CD8-positive, alpha-beta memory T cell (primary cell): ENCODE measurements at regions of chrX and their contacts with region 1.

Region 1: DNA sequence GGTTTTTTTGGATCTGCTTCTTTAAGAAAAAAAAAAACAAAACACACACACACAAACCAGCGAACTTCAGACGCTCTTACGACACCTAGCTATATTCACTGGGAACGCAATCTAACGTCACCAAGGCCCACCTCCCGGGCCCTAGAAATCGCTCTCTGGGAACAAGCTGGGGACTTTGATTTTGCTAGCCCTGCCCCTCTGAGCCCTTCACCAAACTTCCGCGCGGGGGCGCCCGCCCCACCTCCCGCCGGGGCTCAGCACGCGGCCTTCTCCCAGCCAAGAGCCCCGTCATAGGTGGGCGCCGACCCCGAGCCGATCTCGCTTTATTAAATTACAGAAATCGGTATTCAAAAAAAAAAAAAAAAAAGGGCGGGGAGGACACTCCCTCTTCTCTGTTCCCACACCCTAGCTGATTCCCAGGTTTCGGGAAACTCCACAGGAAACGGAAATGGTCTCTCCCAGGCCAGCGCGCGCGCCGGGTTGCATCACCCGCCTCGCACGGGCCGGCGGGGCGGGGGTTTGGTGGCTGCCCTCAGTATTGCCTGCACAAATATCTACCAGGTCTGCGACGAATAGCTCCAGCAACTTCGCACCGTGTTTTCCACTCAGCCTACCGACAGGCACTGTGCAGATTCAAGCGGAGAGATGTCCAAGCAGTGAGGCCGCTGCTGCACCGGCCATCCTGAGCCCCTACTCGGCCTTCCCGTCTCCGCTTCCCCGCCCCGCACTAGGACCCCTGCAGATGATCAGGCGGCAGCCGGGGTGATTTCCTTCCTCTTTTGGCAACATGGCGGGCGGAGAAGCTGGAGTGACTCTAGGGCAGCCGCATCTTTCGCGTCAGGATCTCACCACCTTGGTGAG is at the start of gene EIF2S3:
- DNase-seq: peak; percentile 72 to 96 (median 90)
- H3K4me3 ChIP-seq: peak within 1 kb of the TSS; percentile 90
- H3K4me3 Mint-ChIP-seq: peak within 1 kb of the TSS in 1 of 7 donors; percentile 95
- H3K27ac ChIP-seq: peak within 1 kb of the TSS; percentile 90
- H3K27ac Mint-ChIP-seq: peak within 1 kb of the TSS in 2 of 8 donors; percentile 99 to 100
- H3K4me1 ChIP-seq: peaks cover 7% of the 10 kb centered on the region
- H3K4me1 Mint-ChIP-seq: peaks cover 8 to 16% (median 13%) of the 10 kb centered on the region in 3 donors
- H3K27me3 ChIP-seq: no peaks in the 10 kb centered on the region
- H3K27me3 Mint-ChIP-seq: no peaks in the 10 kb centered on the region
- total RNA-seq, gene EIF2S3: 259 to 277 TPM

Region 2: GRCh38 chrX:23782863-23783568 is 271.4 kb before region 1 on chrX and contains the start of gene SAT1:
- CTCF ChIA-PET with region 1: interaction called, 20 read pairs
- POLR2A ChIA-PET with region 1: interaction called, 8 read pairs
- DNase-seq: peak; percentile 87 to 96 (median 90)
- H3K4me3 ChIP-seq: peak within 1 kb of the TSS; percentile 78
- H3K4me3 Mint-ChIP-seq: peak within 1 kb of the TSS; percentile 95 to 100 (median 97)
- H3K27ac ChIP-seq: peak within 1 kb of the TSS; percentile 89
- H3K27ac Mint-ChIP-seq: peak within 1 kb of the TSS; percentile 96 to 98 (median 98)
- H3K4me1 ChIP-seq: peaks cover 23% of the 10 kb centered on the region
- H3K4me1 Mint-ChIP-seq: peaks cover 34 to 44% (median 42%) of the 10 kb centered on the region in 3 donors
- H3K27me3 ChIP-seq: no peaks in the 10 kb centered on the region
- H3K27me3 Mint-ChIP-seq: peaks cover 0 to 5% of the 10 kb centered on the region in 2 donors
- total RNA-seq, gene SAT1: 40.0 to 41.3 TPM

Region 3: DNA sequence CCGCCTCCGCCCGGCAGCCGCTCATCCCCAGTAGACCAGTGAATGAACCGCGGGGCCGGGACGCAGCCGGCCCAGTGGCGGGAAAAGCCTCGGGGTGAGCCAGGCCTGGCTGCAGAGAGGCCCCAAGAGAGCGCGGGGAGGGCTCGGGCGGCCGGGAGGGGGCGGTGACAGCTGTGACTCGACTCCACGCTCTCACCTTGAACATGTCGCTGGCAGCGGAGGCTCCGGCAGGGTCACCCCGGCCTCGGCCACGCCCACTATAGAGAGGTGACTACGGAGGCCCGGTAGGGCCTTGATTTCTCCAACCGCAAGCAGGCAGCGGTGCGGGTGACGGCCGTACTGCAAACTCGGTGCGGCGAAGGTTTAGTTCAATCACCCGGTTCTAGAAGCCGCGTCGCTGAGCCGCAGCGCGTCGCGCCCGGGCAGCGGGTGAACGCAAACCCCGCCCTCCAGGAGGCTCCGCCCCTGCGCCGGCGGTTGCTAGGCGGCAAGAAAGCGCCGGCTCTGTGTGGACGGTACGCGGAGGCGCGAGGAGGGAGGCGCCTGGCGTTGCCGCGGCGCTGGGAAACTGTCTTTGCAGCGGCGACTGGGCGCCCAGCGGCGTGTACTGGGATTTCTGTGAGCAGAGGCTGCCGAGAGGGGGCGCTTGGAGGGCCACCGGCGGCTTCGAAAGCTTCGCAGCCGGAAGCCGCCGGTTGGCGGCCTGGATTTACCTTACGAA is 146.8 kb before region 1 on chrX and contains the starts of genes APOO and CXorf58:
- CTCF ChIA-PET with region 1: interaction called, 47 read pairs
- POLR2A ChIA-PET with region 1: interaction called, 17 read pairs
- DNase-seq: peak; percentile 83 to 94 (median 91)
- H3K4me3 ChIP-seq: peak within 1 kb of the TSS; percentile 50
- H3K4me3 Mint-ChIP-seq: peak within 1 kb of the TSS; percentile 80 to 91 (median 83)
- H3K27ac ChIP-seq: peak within 1 kb of the TSS; percentile 87
- H3K27ac Mint-ChIP-seq: peak within 1 kb of the TSS; percentile 72 to 97 (median 92)
- H3K4me1 ChIP-seq: peaks cover 10% of the 10 kb centered on the region
- H3K4me1 Mint-ChIP-seq: peaks cover 8 to 15% (median 10%) of the 10 kb centered on the region in 3 donors
- H3K27me3 ChIP-seq: no peaks in the 10 kb centered on the region
- H3K27me3 Mint-ChIP-seq: peaks cover 0 to 3% of the 10 kb centered on the region in 2 donors
- total RNA-seq, gene APOO: 38.3 to 42.6 TPM
- total RNA-seq, gene CXorf58: 0.11 TPM in 1 of 2 experiments, not detected in the other

Region 4: DNA sequence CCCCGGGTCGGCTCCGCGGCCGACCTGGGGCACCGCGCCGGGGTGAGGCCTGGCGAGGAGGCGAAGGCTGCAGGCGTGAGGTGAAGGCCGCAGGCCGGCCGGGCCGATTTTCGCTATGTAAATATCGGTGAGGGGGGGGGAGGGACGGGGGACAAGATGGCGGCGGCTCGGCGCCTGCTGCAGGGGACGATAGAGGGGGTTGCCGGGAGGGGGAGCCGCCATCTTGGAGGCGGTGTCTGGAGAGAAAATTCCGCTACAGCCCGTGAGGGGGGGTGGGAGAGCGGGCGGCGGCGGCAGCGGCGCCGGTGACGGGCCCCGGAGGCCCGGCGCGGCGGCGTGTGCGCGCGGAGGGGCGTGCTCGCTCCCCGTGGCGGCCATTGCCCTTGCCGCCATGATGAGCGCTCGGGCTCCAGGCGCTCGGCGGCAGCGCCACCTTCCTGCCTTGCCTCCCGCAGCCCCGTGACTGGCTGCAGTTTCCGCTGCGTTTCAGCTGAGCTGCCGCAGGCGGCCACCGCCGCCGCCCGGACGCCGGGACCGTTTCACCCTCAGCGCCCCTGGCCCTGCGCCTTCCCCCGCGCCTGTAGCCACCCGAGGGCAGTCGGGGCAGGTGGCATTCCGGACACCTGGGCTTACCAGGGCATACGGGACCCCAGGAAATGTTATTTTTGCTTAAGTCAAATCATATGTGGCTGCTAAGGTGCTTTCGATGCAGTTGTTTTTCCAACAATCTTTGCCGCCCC is 95.8 kb after region 1 on chrX:
- CTCF ChIA-PET with region 1: no interaction called
- POLR2A ChIA-PET with region 1: interaction called, 10 read pairs
- DNase-seq: peak; percentile 74 to 94 (median 91)
- H3K4me3 ChIP-seq: peak overlapping the region; percentile 77
- H3K4me3 Mint-ChIP-seq: peak overlapping the region; percentile 87 to 94 (median 90)
- H3K27ac ChIP-seq: peak overlapping the region; percentile 84
- H3K27ac Mint-ChIP-seq: peak overlapping the region; percentile 83 to 94 (median 92)
- H3K4me1 ChIP-seq: peaks cover 49% of the 10 kb centered on the region
- H3K4me1 Mint-ChIP-seq: peaks cover 65 to 78% (median 69%) of the 10 kb centered on the region in 3 donors
- H3K27me3 ChIP-seq: no peaks in the 10 kb centered on the region
- H3K27me3 Mint-ChIP-seq: no peaks in the 10 kb centered on the region